ENCODE measurements at regions of chr5 and their contacts with region 1.

Region 1: GRCh38 chr5:154610321-154611154 is 132.5 kb upstream of the HAND1 start:
- DNase-seq: peak in 1 of 2 donors; percentile 64
- ATAC-seq: peak; percentile 61 to 80 (median 68)
- H3K4me3 ChIP-seq: no peak overlapping the region
- H3K4me3 Mint-ChIP-seq: no peak overlapping the region
- H3K27ac ChIP-seq: no peak overlapping the region
- H3K27ac Mint-ChIP-seq: no peak overlapping the region
- H3K4me1 ChIP-seq: peaks cover 14% of the 10 kb centered on the region
- H3K4me1 Mint-ChIP-seq: peaks cover 0 to 9% of the 10 kb centered on the region in 2 donors
- H3K27me3 ChIP-seq: peaks cover 26% of the 10 kb centered on the region
- H3K27me3 Mint-ChIP-seq: peaks cover 32 to 33% of the 10 kb centered on the region in 2 donors
- CTCF ChIP-seq: peak; percentile 23

Region 2: DNA sequence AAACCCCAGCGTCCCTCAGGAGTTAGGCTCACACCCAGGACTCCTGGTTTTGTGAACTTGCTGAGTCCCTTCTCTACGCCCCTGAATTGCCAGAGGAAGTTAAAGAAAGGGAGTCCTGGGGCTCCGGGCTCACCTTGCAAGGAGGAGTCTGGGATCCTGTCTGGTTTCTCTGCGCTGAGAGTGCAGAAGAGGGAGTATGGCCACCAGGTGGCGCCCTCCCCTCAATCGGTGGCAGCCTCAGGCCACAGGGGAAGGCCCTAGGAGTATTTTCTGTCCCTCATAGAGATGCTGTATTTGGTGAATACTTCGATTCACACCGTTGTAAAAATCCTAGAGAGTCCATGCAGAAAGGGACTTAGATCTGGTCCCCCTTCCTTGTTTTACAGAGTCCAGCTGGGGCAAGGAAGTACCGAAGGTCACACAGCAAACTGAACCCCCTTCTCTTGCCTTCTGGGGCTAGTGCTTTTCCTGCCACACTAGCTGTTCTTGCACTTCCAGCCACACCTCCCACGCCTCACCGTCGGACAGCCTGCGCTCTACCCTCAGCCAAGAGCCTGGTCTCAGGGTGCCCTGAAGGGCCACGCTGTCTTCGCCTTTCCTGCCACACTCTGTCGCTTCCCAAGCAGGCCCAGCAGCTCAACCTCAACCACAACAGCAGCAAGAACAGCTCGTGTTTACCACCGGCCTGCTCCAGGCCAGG is 142.7 kb before region 1 on chr5:
- intact Hi-C with region 1: loop called (anchors 10 kb)
- DNase-seq: peak; percentile 71 to 83
- ATAC-seq: peak; percentile 84 to 97 (median 95)
- H3K4me3 ChIP-seq: no peak overlapping the region
- H3K4me3 Mint-ChIP-seq: no peak overlapping the region
- H3K27ac ChIP-seq: no peak overlapping the region
- H3K27ac Mint-ChIP-seq: no peak overlapping the region
- H3K4me1 ChIP-seq: no peaks in the 10 kb centered on the region
- H3K4me1 Mint-ChIP-seq: peaks cover 0 to under 1% of the 10 kb centered on the region in 2 donors
- H3K27me3 ChIP-seq: peaks cover 15% of the 10 kb centered on the region
- H3K27me3 Mint-ChIP-seq: peaks cover 21 to 23% of the 10 kb centered on the region in 2 donors
- CTCF ChIP-seq: peak; percentile 92